CD4-positive, alpha-beta T cell (primary cell): ENCODE measurements at regions of chr1 and their contacts with region 1.

Region 1: DNA sequence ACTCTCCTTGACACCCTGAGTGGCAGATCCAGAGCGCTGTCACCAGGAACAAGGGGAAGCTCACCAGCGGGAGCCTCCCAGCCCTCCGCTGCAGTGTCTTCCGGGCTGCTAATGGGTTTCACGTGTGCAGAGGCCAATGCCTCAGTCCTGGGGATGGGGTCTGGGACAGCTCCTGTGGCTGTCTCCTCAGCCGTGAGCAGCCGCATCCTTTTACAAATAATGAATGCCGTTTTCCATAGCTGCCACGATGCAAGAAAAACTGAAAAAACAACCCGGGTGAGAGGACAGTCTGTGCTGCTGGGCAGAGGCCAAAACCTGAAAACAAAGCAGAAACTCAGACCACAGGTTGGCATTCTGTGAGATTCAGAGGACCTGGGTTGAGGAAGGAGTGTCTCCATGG is 212.2 kb upstream of the RAB4A start:
- DNase-seq: peak in 2 of 14 experiments; percentile 18 to 29
- ATAC-seq: no peak
- H3K4me3 ChIP-seq: no peak overlapping the region
- H3K4me3 Mint-ChIP-seq: peak overlapping the region; percentile 71
- H3K27ac ChIP-seq: peak overlapping the region in 1 of 2 donors; percentile 42
- H3K27ac Mint-ChIP-seq: peak overlapping the region; percentile 75
- H3K4me1 ChIP-seq: peaks cover 50% of the 10 kb centered on the region
- H3K4me1 Mint-ChIP-seq: peaks cover 62% of the 10 kb centered on the region
- H3K27me3 ChIP-seq: no peaks in the 10 kb centered on the region
- H3K27me3 Mint-ChIP-seq: no peaks in the 10 kb centered on the region
- CTCF ChIP-seq: no peak

Region 2: DNA sequence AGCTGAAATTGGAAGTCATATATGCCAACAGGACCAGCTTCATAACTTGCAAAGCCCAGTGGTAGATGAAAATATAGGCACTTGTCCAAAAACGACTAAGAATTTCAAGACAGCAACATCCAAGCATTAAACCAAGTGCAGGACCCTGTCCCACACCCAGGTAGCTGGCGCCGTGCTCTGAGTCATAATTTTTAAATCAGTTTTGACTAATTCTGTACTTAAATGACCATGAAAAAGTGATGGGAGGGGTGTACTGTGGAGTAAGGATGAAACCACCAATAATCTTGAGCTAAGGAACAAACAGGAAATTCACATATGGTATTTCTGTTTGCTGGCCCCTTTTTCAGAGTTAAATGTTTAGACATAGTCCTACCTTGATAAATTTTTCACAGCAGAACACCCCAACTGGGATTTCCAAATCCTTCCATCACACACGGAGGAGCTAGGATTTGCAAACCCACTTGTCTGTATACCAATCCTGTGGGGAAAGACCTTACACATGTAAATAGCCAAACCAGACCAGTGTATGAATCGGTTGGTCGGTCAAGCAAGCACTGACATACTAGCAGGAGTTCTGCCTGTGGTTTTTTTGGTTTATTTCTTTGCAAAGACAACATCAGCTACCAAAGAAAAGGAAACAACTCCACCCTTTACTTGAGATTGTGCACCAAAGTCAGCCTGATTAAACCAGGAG is 23.5 kb before region 1 on chr1:
- CTCF ChIA-PET with region 1: no interaction called
- POLR2A ChIA-PET with region 1: interaction called, 11 read pairs
- intact Hi-C with region 1: no loop called
- DNase-seq: peak in 1 of 14 experiments; percentile 24
- ATAC-seq: no peak
- H3K4me3 ChIP-seq: peak overlapping the region; percentile 15
- H3K4me3 Mint-ChIP-seq: peak overlapping the region; percentile 60
- H3K27ac ChIP-seq: peak overlapping the region in 1 of 2 donors; percentile 63
- H3K27ac Mint-ChIP-seq: peak overlapping the region; percentile 38
- H3K4me1 ChIP-seq: peaks cover 60% of the 10 kb centered on the region
- H3K4me1 Mint-ChIP-seq: peaks cover 57% of the 10 kb centered on the region
- H3K27me3 ChIP-seq: no peaks in the 10 kb centered on the region
- H3K27me3 Mint-ChIP-seq: no peaks in the 10 kb centered on the region
- CTCF ChIP-seq: no peak

Region 3: DNA sequence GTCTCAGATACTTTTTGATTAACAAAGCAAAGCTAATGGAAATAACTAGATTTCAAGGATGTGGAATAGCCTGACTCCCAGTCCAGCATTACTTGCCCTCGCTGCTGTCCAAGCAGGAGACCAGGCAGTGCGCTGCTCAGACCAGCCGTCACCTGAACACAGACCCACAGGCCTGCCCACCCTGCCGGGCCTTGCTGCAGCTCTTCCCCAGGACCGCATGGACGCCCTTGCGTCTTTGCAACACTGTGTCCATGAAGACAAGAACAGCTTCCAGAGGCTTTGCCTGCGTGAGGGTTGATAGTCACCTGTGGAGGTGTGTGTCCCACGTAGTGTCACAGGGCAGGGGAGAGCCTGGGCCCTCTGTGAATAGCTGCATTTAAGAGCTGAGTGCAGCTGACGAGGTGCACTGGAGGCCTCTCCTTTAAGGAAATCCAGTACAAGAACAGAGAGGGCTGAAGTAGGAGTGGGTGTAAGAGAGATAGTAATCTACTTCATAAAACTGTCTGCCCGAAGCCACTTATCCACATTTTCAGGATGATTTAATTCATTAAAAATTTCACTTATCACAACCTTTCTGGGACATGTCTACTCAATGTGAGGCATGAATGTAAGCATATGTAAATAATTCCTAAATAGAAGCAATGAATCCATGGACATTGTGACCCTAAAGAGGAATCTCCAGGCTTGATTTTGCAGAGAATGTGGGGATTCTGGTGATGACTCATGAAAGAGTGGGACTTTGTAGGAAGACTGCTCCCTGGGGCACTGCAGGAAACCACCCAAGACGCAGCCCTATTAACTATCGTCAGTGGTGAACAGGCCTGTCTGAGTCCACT is 36.0 kb after region 1 on chr1:
- CTCF ChIA-PET with region 1: no interaction called
- POLR2A ChIA-PET with region 1: no interaction called
- intact Hi-C with region 1: no loop called
- DNase-seq: no peak
- ATAC-seq: no peak
- H3K4me3 ChIP-seq: no peak overlapping the region
- H3K4me3 Mint-ChIP-seq: no peak overlapping the region
- H3K27ac ChIP-seq: no peak overlapping the region
- H3K27ac Mint-ChIP-seq: no peak overlapping the region
- H3K4me1 ChIP-seq: peaks cover 10% of the 10 kb centered on the region
- H3K4me1 Mint-ChIP-seq: peaks cover 23% of the 10 kb centered on the region
- H3K27me3 ChIP-seq: no peaks in the 10 kb centered on the region
- H3K27me3 Mint-ChIP-seq: no peaks in the 10 kb centered on the region
- CTCF ChIP-seq: no peak

Region 4: DNA sequence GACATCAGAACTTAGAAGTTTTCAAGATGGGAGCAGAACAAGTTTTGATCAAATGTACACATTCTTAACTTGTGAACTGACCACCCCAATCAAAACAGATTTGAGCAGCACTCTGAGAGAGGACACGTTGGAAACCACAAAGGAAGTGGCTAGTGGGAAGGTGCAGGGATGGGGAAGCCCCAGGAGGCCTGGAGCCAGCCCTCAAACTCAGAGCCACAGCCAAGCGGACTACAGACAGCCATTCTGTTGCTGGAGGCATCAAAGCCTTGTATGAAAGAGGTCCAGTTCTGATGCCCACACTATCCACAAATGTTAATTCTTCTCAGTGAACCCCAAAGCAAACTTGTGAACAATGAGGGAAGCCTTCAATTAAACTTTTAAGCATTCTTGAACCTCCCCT is 68.6 kb after region 1 on chr1:
- CTCF ChIA-PET with region 1: no interaction called
- POLR2A ChIA-PET with region 1: interaction called, 12 read pairs
- intact Hi-C with region 1: no loop called
- DNase-seq: peak in 3 of 14 experiments; percentile 44 to 49 (median 44)
- ATAC-seq: no peak
- H3K4me3 ChIP-seq: no peak overlapping the region
- H3K4me3 Mint-ChIP-seq: peak overlapping the region; percentile 60
- H3K27ac ChIP-seq: no peak overlapping the region
- H3K27ac Mint-ChIP-seq: peak overlapping the region; percentile 57
- H3K4me1 ChIP-seq: peaks cover 41% of the 10 kb centered on the region
- H3K4me1 Mint-ChIP-seq: peaks cover 58% of the 10 kb centered on the region
- H3K27me3 ChIP-seq: no peaks in the 10 kb centered on the region
- H3K27me3 Mint-ChIP-seq: no peaks in the 10 kb centered on the region
- CTCF ChIP-seq: no peak